Activated naive CD4-positive, alpha-beta T cell treated with anti-CD3 and anti-CD28 coated beads for 36 hours (primary cell): ENCODE measurements at regions of chr15 and their contacts with region 1.

Region 1: DNA sequence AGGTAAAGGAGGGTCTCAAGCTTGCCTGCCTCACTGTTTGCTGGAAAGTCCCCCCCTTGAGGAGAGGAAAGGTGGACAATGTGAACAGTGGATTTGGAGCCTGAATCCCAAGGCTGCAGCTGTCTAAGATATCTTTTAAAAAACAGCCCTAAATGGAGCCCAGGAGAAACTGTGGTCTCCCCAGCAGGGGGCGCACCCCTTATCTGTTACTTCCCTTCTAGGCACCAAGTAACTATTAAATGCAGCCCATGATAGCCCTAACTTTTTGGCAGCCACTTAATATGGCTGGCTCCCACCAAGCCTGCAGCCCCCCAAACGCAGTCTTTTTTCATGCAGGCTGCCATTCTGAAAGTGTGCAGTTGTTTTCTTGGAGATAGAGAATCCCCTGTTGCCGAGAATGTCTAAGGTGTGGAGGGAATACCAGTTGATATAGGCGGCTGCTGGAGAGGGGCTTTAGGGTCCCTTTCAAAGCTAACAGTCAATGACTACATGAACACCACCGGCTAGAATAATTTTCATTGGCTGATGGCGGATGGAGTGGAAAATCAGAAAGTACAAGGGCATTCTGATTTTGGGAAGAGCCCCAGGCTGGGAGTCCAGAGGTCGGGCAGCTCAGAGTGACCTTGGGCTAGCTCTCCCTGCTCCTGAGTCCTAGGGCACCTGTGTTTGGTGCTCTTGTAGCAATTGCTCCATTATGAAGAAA is 1.3 kb downstream of the RHCG start:
- DNase-seq: peak; percentile 65
- H3K4me3 Mint-ChIP-seq: no peak overlapping the region
- H3K27ac Mint-ChIP-seq: no peak overlapping the region
- H3K4me1 Mint-ChIP-seq: peaks cover 7% of the 10 kb centered on the region
- H3K27me3 Mint-ChIP-seq: peaks cover 46% of the 10 kb centered on the region

Region 2: DNA sequence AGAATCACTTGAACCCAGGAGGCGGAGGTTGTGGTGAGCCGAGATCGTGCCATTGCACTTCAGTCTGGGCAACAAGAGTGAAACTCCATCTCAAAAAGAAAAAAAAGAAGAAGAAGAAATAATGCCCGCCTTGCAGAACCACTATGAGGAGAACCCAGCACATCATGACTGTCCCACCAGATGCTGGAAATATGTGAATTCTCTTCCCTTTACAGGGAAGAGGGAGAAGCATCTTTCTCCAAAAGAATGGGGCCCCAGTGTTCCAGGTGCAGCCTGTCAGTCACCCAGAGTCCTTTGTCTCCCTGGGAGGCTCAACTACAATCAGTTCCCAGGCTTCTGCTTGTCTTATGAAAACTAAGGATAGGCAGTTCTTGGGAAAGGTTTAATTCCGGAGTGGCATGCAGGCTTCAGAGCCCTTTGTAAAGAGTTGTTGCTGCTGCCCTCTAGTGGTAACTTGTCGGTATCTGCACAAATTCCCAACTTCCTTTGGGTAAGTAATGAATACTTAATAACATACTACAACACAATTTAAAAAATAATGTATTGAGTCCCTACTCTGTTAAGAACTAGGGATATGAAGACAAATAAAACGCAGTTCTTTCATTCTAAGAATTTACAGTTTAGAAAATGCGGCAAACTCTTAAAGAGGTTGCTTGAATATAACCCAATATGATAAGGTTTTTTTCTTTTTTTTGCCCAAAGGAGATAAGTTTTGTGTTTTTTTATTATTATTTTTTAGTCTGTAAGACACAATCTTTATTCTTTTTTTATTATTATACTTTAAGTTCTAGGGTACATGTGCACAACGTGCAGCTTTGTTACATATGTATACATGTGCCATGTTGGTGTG is 61.6 kb after region 1 on chr15:
- CTCF ChIA-PET with region 1: interaction called, 5 read pairs
- intact Hi-C with region 1: loop called (anchors 1 kb)
- DNase-seq: peak; percentile 71
- H3K4me3 Mint-ChIP-seq: no peak overlapping the region
- H3K27ac Mint-ChIP-seq: no peak overlapping the region
- H3K4me1 Mint-ChIP-seq: no peaks in the 10 kb centered on the region
- H3K27me3 Mint-ChIP-seq: peaks cover 8% of the 10 kb centered on the region